ENCODE measurements at regions of chr22 and their contacts with region 1.

Region 1: GRCh38 chr22:20981787-20982562 is at the start of gene LZTR1:
- DNase-seq: peak; percentile 85
- ATAC-seq: peak; percentile 74
- H3K4me3 Mint-ChIP-seq: peak within 1 kb of the TSS; percentile 98
- H3K27ac Mint-ChIP-seq: peak within 1 kb of the TSS; percentile 92
- H3K4me1 Mint-ChIP-seq: peaks cover 40% of the 10 kb centered on the region
- H3K27me3 Mint-ChIP-seq: no peaks in the 10 kb centered on the region
- total RNA-seq, gene LZTR1: 31.9 to 40.5 TPM

Region 2: GRCh38 chr22:21014202-21014725 is 32.3 kb after region 1 on chr22:
- CTCF ChIA-PET with region 1: interaction called, 5 read pairs
- POLR2A ChIA-PET with region 1: no interaction called
- intact Hi-C with region 1: loop called in 1 of 2 experiments (anchors 1 kb)
- DNase-seq: peak; percentile 91
- ATAC-seq: peak; percentile 97
- H3K4me3 Mint-ChIP-seq: peak overlapping the region; percentile 78
- H3K27ac Mint-ChIP-seq: peak overlapping the region; percentile 67
- H3K4me1 Mint-ChIP-seq: peaks cover 20% of the 10 kb centered on the region
- H3K27me3 Mint-ChIP-seq: no peaks in the 10 kb centered on the region